ENCODE measurements at regions of chr22 and their contacts with region 1.

Region 1: DNA sequence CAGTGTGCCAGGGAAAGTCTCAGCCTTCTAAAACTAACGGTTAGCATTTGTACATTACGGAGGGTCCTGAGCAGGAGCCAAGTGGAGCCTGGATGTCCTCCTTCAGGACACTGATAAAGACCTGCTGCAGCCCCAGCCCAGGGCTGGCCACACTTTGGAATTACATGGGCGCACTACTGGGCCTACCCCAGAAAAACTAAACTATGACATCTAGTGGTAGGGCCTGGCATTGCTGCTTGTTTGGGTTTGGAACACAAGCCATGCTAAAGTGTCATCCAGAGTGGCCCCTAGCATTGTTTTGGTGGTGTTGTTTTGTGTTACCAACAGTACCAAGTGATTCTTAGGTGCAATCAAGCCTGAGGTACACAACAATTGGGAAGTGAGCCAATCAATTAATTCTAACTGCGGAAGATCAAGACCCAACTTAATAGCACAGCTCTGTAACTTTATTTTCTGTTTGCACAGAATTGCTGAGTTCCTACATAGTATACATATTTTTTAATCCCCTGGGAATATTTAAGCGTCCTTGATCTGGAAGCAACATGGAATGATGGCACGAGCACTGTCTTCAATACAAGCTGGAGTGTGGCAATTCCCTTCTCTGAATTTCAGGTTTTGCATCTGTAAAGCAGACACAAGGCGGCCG is 340.7 kb downstream of the LARGE1 start:
- DNase-seq: peak; percentile 69
- H3K4me3 ChIP-seq: no peak overlapping the region
- H3K27ac ChIP-seq: no peak overlapping the region
- H3K4me1 ChIP-seq: peaks cover 0 to 22% (median 4%) of the 10 kb centered on the region in 4 donors
- H3K27me3 ChIP-seq: no peaks in the 10 kb centered on the region
- CTCF ChIP-seq: peak; percentile 82 to 92 (median 88)
- EP300 ChIP-seq: no peak
- POLR2A ChIP-seq: no peak

Region 2: GRCh38 chr22:32636884-32637283 is 942.7 kb before region 1 on chr22:
- in situ Hi-C with region 1: no loop called
- intact Hi-C with region 1: no loop called
- DNase-seq: no peak
- H3K4me3 ChIP-seq: no peak overlapping the region
- H3K27ac ChIP-seq: no peak overlapping the region
- H3K4me1 ChIP-seq: no peaks in the 10 kb centered on the region
- H3K27me3 ChIP-seq: no peaks in the 10 kb centered on the region
- CTCF ChIP-seq: no peak
- EP300 ChIP-seq: no peak
- POLR2A ChIP-seq: no peak

Region 3: DNA sequence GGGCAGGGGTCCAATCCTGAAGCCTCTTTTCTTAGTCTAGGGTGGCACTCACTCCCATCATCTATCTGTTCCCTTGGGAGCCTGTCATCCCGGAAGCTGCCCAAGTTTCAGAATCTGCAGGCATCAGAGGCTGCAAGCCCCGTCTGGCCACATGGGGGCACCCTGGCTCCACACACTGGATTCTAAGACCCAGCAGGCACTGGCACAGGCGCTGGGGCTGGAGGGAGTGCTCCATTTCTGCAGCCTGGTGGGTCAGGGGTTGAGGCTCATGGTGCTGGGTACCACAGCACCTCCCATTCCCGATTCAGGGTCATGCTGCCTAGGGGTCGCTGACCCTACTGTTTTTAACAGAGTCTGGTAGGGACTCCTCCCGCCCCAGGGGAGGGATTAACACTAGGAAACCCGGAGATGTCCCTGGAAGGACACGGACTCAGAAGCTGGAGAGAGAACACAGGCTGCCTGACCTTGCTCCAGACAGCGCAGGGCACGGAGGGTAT is 277.5 kb before region 1 on chr22:
- in situ Hi-C with region 1: loop called in 3 of 4 experiments (anchors 10 to 25 kb)
- intact Hi-C with region 1: no loop called
- DNase-seq: peak; percentile 85
- H3K4me3 ChIP-seq: no peak overlapping the region
- H3K27ac ChIP-seq: no peak overlapping the region
- H3K4me1 ChIP-seq: no peaks in the 10 kb centered on the region
- H3K27me3 ChIP-seq: no peaks in the 10 kb centered on the region
- CTCF ChIP-seq: peak; percentile 90 to 93 (median 91)
- EP300 ChIP-seq: no peak
- POLR2A ChIP-seq: no peak

Region 4: DNA sequence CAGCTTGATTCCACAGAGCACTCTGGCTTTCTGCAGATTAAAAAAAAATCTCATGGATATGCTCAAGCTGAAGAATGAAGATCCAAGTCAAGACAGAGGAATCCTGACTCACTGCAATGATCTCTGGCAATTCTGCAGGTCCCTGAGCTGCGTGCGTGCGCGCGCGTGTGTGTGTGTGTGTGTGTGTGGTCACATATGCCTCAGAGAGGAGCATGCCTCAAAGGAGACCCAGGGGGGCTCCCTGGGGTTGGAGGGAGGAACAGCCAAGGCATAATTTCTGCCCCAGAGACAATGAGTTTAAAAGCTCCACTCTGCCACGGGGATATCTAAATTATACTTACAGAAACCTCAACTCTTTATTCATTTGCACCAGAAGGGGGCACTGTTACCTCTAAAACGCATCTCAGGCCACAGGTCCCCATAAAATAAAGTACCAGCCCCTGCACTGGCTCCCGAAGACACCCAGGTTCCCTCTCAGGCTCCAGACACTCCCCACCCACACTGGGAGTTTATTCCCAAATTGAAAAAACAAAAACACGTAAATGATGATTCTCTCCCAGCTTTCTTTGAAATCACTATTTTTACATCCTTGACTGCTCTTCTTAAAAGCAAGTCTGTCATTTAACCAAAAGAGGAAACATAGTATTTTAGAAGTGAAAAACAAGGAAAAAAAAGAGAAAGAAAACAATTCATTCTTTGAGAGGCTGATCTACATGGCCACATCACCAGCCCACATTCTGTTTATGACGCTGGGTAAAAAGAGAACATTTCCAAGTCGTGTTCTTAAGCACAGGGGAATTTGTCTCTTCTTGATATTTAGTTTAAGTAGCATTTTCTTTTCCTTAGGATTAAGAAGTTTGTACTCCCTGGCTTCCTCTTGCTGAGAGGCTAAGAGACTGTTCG is 60.2 kb before region 1 on chr22:
- in situ Hi-C with region 1: loop called in 1 of 4 experiments (anchors 5 kb)
- intact Hi-C with region 1: loop called (anchors 10 kb)
- DNase-seq: peak; percentile 22
- H3K4me3 ChIP-seq: no peak overlapping the region
- H3K27ac ChIP-seq: peak overlapping the region in 1 of 4 donors; percentile 19
- H3K4me1 ChIP-seq: peaks cover 0 to 16% (median 6%) of the 10 kb centered on the region in 4 donors
- H3K27me3 ChIP-seq: no peaks in the 10 kb centered on the region
- CTCF ChIP-seq: peak; percentile 59 to 71 (median 65)
- EP300 ChIP-seq: no peak
- POLR2A ChIP-seq: no peak

Region 5: DNA sequence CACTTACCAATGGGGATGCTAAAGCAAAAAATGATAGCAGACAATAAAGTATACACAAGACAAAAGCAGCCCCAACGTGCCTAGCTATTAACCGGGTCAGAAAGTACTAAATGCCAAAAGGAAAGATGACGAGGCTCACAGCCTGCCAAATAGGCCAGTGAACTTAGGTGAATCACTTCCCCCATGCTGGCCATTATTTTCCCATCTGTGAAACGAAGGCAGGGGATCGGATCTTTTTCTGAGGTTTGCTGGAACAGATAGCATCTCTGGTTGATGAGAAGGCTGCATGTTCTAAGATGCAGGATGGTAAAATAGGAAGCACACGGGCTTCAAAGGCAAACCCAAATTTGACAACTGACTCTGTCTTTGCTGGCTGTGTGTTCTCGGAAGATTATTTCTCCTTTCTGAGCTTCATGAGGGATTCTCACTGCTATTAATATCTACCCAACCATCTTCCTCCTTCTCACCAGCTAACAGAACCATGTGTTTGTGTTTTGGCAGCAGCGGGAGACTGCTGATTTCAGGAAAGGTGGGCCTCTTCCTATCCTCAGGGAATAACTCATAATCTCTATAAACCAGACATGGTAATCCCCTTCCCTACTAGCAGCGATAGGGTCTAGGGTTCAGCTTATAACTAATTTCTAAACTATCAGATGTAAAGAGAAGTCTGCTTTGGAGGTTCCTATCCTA is 50.0 kb before region 1 on chr22:
- in situ Hi-C with region 1: no loop called
- intact Hi-C with region 1: loop called (anchors 10 kb)
- DNase-seq: no peak
- H3K4me3 ChIP-seq: no peak overlapping the region
- H3K27ac ChIP-seq: peak overlapping the region in 1 of 4 donors; percentile 5
- H3K4me1 ChIP-seq: no peaks in the 10 kb centered on the region
- H3K27me3 ChIP-seq: no peaks in the 10 kb centered on the region
- CTCF ChIP-seq: no peak
- EP300 ChIP-seq: no peak
- POLR2A ChIP-seq: no peak

Measured in transverse colon (tissue), 4 donors.